Lower leg skin (tissue), 4 donors: ENCODE measurements at regions of chr6 and their contacts with region 1.

Region 1: GRCh38 chr6:41159415-41160082 is 3.4 kb downstream of the TREM2 start:
- DNase-seq: no peak
- H3K4me3 ChIP-seq: no peak overlapping the region
- CTCF ChIP-seq: no peak
- POLR2A ChIP-seq: no peak

Region 2: GRCh38 chr6:40258531-40258930 is 901.0 kb before region 1 on chr6:
- intact Hi-C with region 1: loop called (anchors 5 kb)
- DNase-seq: no peak
- H3K4me3 ChIP-seq: no peak overlapping the region
- CTCF ChIP-seq: no peak
- POLR2A ChIP-seq: no peak